ENCODE measurements at regions of chr2 and their contacts with region 1.

Region 1: GRCh38 chr2:49616800-49617199 is 462.5 kb upstream of the FSHR start:
- DNase-seq: no peak
- H3K4me3 ChIP-seq: no peak overlapping the region
- H3K27ac ChIP-seq: no peak overlapping the region
- H3K4me1 ChIP-seq: no peaks in the 10 kb centered on the region
- H3K27me3 ChIP-seq: no peaks in the 10 kb centered on the region
- CTCF ChIP-seq: peak in 2 of 3 experiments; percentile 49 to 71; a peak in 3 of 4 replicates
- EP300 ChIP-seq: no peak
- POLR2A ChIP-seq: no peak
- RAD21 ChIP-seq: peak; percentile 73 to 81

Region 2: DNA sequence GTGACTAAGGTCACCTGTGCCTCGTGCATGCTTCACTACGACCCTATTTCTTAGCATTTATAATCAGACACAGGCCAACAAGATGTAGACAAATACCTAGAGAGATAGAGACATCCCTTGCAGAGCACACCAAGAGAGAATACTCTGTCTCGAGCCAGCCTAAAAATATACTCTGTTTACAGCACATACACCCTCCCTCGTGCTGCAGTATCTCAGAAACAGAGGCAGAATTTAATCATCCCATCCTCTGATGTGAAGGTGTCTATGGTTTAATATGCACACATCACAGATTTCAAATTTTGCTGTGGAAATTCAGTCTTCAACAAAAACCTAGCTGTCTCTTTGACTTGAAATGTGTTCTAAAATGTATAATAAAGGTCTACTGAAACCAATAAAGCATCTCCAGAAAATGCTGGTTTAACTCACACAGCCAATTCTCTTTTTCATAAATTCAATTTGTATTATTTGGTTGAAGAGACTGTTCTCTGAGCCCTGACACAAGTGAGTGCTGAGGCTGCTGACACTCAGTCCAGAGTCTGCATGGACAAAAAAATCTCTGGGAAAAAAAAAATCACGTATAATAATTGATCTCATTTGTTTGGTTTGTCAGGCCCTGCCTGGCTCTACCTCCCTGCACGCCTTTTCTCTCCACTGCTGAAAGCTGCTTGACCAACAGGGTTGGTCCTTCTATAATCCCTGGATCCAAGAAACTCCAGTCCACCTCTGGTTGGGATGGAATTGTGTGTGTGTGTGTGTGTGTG is 320.5 kb before region 1 on chr2:
- CTCF ChIA-PET with region 1: no interaction called
- POLR2A ChIA-PET with region 1: no interaction called
- DNase-seq: no peak
- H3K4me3 ChIP-seq: no peak overlapping the region
- H3K27ac ChIP-seq: no peak overlapping the region
- H3K4me1 ChIP-seq: no peaks in the 10 kb centered on the region
- H3K27me3 ChIP-seq: no peaks in the 10 kb centered on the region
- CTCF ChIP-seq: no peak
- EP300 ChIP-seq: no peak
- POLR2A ChIP-seq: no peak
- RAD21 ChIP-seq: no peak

Region 3: DNA sequence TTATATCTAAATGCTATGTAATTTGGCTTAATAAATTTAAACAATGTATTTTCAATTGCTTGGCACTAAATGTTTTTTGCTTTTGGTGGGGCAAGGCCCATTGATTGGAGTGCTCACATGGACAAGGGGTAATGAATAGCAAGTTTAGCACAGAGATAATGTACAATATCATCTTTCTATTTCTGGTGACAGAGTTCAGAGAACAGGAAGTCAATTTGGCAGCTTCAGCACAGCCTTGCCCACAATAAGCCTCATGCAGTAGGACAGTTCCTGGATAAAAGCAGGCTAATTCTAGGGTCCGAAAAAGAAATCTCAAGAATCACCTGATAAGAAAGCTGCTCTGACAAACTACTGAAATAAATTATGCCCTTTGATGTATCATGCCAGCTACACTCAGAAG is 18.6 kb before region 1 on chr2:
- CTCF ChIA-PET with region 1: interaction called, 26 read pairs
- POLR2A ChIA-PET with region 1: no interaction called
- DNase-seq: no peak
- H3K4me3 ChIP-seq: no peak overlapping the region
- H3K27ac ChIP-seq: no peak overlapping the region
- H3K4me1 ChIP-seq: no peaks in the 10 kb centered on the region
- H3K27me3 ChIP-seq: no peaks in the 10 kb centered on the region
- CTCF ChIP-seq: no peak
- EP300 ChIP-seq: no peak
- POLR2A ChIP-seq: no peak
- RAD21 ChIP-seq: no peak

Region 4: DNA sequence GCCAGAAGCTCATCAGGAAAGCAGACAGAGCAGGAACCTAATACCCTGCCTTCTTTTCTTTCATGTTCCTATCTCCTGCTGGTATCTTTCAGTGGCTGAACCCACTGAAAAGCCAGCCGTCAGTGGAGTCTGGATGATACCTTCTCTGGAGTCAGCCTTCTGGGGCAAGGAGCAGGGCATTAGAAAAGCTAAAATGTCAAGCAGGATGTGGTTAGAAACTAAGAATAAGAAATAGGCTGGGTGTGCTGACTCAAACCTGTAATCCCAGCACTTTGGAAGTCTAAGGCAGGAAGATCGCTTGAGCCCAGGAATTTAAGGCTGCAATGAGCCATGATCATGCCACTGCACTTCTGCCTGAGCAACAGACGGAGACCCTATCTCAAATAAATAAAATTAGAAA is 179.5 kb after region 1 on chr2:
- CTCF ChIA-PET with region 1: no interaction called
- POLR2A ChIA-PET with region 1: no interaction called
- DNase-seq: no peak
- H3K4me3 ChIP-seq: no peak overlapping the region
- H3K27ac ChIP-seq: no peak overlapping the region
- H3K4me1 ChIP-seq: no peaks in the 10 kb centered on the region
- H3K27me3 ChIP-seq: no peaks in the 10 kb centered on the region
- CTCF ChIP-seq: no peak
- EP300 ChIP-seq: no peak
- POLR2A ChIP-seq: no peak
- RAD21 ChIP-seq: no peak